OCI-LY7 (cell line): ENCODE measurements at regions of chr18 and their contacts with region 1.

Region 1: DNA sequence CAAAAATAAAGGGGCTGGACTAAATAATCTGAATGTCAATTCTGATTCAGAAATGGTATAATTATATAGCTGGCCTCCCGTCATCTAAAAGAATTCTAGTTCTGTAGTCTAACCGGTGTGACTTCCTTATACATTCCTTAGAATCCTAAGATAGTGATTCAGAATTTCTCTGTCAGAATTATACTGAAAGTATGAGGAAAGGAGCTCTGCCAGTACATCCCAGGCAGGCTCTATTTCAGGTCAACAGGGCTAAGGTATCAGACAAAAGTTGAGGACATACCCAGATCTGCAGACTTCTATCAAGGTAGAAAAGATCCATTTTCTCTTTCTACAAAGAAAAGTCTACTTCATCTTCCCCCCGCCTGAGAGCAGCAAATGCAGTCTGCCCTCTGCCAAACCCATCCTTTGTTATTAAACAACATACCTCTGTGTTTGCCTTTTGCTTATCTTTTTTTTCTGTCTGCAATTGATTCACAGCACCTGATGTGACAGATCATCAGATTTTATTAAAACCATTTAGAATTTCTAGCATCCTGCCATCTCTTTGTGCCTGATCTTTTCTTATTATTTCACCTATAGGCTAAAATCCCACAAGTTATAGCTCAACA is 128.4 kb downstream of the METTL4 start:
- DNase-seq: no peak
- H3K4me3 ChIP-seq: no peak overlapping the region
- H3K27ac ChIP-seq: no peak overlapping the region
- H3K4me1 ChIP-seq: peaks cover 20% of the 10 kb centered on the region
- CTCF ChIP-seq: no peak

Region 2: GRCh38 chr18:2431806-2432205 is 11.1 kb before region 1 on chr18:
- CTCF ChIA-PET with region 1: interaction called, 3 read pairs
- POLR2A ChIA-PET with region 1: interaction called, 13 read pairs
- intact Hi-C with region 1: no loop called
- DNase-seq: no peak
- H3K4me3 ChIP-seq: no peak overlapping the region
- H3K27ac ChIP-seq: no peak overlapping the region
- H3K4me1 ChIP-seq: no peaks in the 10 kb centered on the region
- CTCF ChIP-seq: no peak